Activated B cell treated with CpG ODN at 0.5 μM for 24 hours (primary cell): ENCODE measurements at regions of chr5 and their contacts with region 1.

Region 1: DNA sequence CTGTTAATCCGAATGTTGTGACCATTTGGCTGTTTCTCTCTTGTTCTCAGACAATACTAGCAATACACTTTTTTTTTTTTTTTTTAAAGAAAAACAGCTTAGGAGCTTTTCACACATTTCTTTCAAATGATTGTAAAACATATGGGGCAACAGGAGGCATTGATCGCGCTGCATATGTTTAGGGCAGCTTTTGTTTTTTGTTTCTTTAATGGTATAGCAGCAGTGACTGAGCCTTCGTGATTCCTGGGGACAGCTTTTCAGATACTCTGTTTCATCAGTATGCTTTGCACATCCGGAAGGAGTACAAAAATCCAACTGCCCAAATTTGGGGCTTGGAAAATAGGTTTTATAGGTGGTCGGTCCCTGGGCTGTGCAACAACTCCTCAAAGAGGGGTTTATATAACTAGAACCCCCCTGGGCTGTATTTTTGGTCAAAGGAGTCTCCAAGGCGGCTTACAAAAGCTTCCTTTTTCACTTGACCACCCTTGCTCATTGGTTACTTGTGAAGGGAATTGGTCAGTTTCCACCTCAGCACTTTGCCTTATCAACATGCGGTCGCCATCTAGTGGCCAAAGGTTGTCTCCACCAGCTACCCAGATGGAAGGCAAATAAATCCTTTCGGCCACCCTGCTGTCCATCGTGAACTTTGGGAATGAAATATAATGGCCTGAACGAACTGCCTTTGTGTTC is 91.8 kb downstream of the PDE6A start:
- DNase-seq: peak; percentile 29
- ATAC-seq: peak; percentile 25
- H3K4me3 Mint-ChIP-seq: no peak overlapping the region
- H3K27ac Mint-ChIP-seq: no peak overlapping the region
- H3K4me1 Mint-ChIP-seq: no peaks in the 10 kb centered on the region
- H3K27me3 Mint-ChIP-seq: no peaks in the 10 kb centered on the region
- CTCF ChIP-seq: peak; percentile 20

Region 2: DNA sequence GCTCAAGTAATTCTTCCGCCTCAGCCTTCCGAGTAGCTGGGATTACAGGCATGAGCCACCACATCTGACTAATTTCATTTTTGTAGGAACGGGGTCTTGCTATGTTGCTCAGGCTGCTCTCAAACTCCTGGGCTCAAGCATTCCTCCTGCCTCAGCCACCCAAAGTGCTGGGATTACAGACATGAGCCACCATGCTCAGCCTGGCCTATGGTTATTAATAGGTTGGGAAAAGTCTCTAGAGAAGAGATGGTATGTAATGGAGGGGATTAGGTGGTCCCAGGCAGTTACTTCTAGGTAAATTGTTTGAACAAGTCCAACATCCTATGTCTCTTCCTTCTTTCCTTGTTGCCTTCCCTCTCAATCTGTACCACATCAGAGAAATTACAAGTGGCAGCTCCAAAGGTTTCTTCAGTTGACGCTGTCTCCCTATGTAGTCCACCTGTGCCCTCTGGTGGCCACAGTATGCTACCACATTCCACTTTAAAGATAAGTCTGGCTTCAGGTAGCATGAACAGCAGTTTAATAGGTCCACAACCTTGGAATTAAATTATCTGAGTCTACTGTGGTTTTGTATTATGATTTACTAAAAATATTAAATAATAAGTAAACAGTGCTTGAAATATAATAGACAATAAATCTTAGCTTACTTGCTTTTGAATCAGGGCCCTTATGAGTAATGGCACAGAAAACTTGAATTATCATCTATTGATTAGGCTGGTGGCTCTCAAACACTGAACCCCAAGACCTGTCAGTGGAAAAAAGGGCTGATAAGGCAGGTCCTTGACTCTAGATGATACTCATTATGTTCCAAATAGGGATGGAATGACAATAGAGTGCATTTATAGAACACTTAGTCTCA is 138.0 kb after region 1 on chr5:
- CTCF ChIA-PET with region 1: interaction called, 23 read pairs
- POLR2A ChIA-PET with region 1: no interaction called
- intact Hi-C with region 1: loop called (anchors 5 kb)
- DNase-seq: peak; percentile 34
- ATAC-seq: peak; percentile 99
- H3K4me3 Mint-ChIP-seq: no peak overlapping the region
- H3K27ac Mint-ChIP-seq: no peak overlapping the region
- H3K4me1 Mint-ChIP-seq: no peaks in the 10 kb centered on the region
- H3K27me3 Mint-ChIP-seq: no peaks in the 10 kb centered on the region
- CTCF ChIP-seq: peak; percentile 95

Region 3: DNA sequence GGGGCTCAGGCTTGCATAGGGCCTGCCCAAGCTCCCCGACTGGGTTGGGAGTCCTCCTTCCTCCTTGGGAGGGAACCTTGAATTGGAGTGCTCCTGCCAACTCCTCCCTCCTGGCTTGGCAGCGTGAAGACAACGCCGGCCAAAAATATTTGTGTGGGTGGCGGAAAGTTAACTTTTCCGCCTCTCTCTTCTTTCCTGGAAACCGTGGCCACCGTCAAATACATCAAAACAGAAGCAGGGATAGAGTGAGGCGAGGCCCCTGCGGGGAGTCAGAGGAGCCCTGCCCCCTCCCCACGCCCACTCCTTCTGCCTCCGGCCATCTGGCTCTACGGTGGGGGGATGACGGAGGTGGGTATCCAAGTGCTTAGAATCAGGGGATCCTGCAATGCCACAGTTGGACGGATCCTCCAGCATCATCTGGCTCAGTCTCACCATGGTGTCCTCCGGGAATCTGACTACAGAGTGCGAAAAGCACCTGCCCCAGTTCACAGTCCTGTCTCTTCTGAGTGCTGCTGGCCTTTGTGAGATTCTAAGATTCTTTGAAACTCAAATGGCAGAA is 762.4 kb after region 1 on chr5:
- CTCF ChIA-PET with region 1: no interaction called
- POLR2A ChIA-PET with region 1: no interaction called
- intact Hi-C with region 1: no loop called
- DNase-seq: no peak
- ATAC-seq: no peak
- H3K4me3 Mint-ChIP-seq: no peak overlapping the region
- H3K27ac Mint-ChIP-seq: no peak overlapping the region
- H3K4me1 Mint-ChIP-seq: no peaks in the 10 kb centered on the region
- H3K27me3 Mint-ChIP-seq: peaks cover 2% of the 10 kb centered on the region
- CTCF ChIP-seq: no peak